ENCODE measurements at regions of chr11 and their contacts with region 1.

Region 1: GRCh38 chr11:115471367-115471766 is 32.8 kb downstream of the CADM1 start:
- DNase-seq: peak; percentile 26
- H3K4me3 ChIP-seq: peak overlapping the region; percentile 26
- H3K27ac ChIP-seq: peak overlapping the region; percentile 87
- H3K4me1 ChIP-seq: peaks cover 74% of the 10 kb centered on the region
- CTCF ChIP-seq: no peak

Region 2: DNA sequence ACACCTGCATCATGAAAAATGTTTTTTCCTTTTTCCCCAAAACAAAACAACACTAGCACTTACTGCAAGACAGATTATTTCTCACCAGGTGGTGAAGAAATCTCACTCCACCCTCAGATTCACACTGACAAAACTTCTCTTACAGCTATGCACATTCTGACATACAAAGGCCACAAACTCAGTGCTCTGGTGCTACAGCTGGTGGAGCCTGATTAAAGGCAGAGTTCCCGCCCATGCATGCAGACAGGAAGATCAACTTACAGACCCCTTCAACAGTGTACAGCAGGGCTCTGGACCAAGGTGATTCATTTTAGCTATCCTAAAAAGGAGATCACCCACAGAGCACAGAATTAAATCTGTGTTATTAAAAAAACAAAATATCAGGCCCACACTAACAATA is 79.8 kb before region 1 on chr11:
- CTCF ChIA-PET with region 1: interaction called, 4 read pairs
- POLR2A ChIA-PET with region 1: interaction called, 4 read pairs
- intact Hi-C with region 1: loop called (anchors 2 kb)
- DNase-seq: peak; percentile 80
- H3K4me3 ChIP-seq: peak overlapping the region; percentile 56
- H3K27ac ChIP-seq: peak overlapping the region; percentile 71
- H3K4me1 ChIP-seq: peaks cover 41% of the 10 kb centered on the region
- CTCF ChIP-seq: no peak

Region 3: DNA sequence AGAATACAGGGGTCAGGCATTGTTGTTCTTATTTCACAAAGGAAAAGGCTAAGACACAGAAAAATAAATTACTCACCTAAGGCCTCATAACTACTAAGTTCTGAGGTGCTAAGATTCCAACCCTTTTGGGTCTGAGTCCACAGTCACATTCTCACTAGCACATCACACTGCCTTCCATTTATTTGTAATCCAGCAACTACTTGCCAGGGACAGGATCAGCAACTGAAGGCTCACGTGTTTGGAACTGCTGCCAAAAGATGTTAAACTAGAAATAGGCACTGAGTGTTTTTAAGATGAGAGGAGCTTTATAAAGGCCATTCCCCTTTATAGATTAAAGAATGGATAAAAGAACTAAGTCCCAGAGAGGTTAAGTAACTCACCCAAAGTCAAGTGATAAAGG is 25.2 kb before region 1 on chr11:
- CTCF ChIA-PET with region 1: no interaction called
- POLR2A ChIA-PET with region 1: no interaction called
- intact Hi-C with region 1: no loop called
- DNase-seq: no peak
- H3K4me3 ChIP-seq: no peak overlapping the region
- H3K27ac ChIP-seq: no peak overlapping the region
- H3K4me1 ChIP-seq: no peaks in the 10 kb centered on the region
- CTCF ChIP-seq: no peak

Region 4: DNA sequence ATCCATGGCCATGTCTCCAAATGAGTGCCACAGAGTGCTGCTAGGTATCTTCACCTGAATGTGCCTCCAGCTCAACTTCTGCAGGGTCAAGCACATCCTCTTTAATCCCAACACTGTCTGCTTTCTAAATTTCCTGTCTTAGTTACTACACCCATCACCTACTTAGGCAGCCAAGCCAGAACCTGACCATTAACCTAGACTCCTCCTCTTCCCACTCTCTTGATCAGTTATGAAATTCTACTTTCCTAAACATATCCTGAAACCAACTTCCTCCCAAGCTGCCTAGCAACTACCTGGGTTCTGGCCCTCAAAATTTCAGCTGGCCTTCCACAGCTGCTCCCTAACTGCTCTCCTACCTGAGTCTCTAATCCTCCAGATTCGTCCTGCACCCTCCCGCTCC is 10.2 kb after region 1 on chr11:
- CTCF ChIA-PET with region 1: no interaction called
- POLR2A ChIA-PET with region 1: interaction called, 23 read pairs
- intact Hi-C with region 1: no loop called
- DNase-seq: no peak
- H3K4me3 ChIP-seq: no peak overlapping the region
- H3K27ac ChIP-seq: no peak overlapping the region
- H3K4me1 ChIP-seq: no peaks in the 10 kb centered on the region
- CTCF ChIP-seq: no peak

Region 5: DNA sequence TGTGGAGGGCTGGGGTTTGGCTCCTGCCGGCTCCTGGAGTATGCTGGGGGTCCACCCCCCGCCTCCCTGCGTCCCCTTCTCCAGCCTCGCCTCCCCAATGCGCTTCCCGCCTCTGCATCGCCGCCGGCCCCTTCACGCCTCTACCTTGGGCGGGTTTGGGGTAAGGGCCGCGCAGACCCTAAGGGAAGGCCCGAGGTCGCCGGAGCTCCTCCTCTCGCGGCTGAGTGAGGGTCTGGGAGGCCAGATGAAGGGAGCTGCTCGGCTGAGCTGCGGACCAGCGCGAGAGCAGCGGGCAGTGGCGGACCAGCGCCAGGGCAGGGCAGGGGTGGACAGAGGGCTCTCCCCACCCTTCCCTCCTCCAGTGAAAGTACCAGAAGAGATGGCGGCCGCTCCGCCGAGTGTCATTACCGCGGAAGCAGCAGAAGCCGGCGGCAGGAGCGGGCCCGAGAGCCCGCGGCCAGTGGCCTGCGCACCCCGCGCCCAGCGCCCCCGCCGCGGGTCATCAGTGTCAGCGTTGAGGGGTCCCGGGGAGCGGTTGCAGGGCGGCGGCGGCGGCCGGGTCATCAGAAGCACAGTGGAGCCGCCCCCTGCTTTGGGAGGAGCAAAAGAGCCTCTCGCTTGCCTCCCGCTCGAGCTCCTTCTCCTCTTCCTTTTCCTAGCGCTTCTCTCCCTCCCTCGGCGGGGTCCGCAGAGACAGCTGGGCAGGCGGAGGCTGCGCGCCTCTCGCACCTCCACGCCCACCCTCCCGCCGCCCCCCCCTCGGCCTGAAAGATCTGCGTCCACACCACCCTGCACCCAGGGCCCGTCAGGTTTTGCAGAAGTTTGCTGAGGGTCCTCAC is 288.5 kb after region 1 on chr11:
- CTCF ChIA-PET with region 1: no interaction called
- POLR2A ChIA-PET with region 1: no interaction called
- intact Hi-C with region 1: no loop called
- DNase-seq: no peak
- H3K4me3 ChIP-seq: no peak overlapping the region
- H3K27ac ChIP-seq: no peak overlapping the region
- H3K4me1 ChIP-seq: no peaks in the 10 kb centered on the region
- CTCF ChIP-seq: no peak

Region 6: DNA sequence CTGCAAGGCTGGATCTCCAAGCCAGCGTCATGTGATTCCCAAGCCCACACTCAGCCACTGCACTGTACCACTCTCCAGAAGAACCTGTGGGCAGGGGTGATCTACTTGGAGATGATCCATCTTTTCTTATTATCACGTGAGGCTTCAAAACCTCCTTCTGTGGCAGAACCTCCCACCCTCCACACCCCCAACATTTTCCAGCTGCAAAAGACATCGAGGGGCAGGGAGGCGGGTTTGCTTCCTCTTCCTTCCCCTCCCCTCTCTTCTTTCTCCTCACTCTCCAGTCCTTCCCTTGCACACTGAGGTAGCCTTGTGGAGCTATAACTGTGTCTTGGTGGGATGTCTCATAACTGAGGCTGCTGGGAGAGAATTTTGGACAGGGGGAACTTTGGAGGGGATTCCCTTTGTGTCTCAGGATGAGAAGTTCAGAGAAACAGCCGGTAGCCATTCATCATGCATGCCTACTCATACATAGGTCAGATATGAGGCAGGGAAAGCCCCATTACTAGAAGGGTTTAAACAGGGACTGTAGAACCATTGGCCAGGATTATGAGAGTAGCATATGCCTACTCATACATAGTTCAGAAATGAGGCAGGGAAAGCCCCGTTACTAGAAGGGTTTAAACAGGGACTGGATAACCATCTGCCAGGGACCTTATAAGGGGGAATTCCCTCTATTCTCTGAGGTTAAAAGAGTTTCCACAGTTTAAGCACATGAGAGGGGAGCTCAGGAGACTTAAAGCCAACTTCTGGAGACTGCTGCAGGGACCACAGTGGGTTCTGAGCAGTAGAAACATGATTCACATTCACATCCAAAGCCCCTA is 453.6 kb after region 1 on chr11:
- CTCF ChIA-PET with region 1: no interaction called
- POLR2A ChIA-PET with region 1: no interaction called
- intact Hi-C with region 1: no loop called
- DNase-seq: no peak
- H3K4me3 ChIP-seq: no peak overlapping the region
- H3K27ac ChIP-seq: no peak overlapping the region
- H3K4me1 ChIP-seq: peaks cover 56% of the 10 kb centered on the region
- CTCF ChIP-seq: no peak